Activated CD4-positive, alpha-beta T cell treated with anti-CD3 and anti-CD28 coated beads for 36 hours (primary cell): ENCODE measurements at regions of chr18 and their contacts with region 1.

Region 1: GRCh38 chr18:2958819-2959298 is 54.1 kb downstream of the LPIN2 start:
- DNase-seq: peak; percentile 63
- ATAC-seq: no peak
- H3K4me3 Mint-ChIP-seq: peak overlapping the region; percentile 71
- H3K27ac Mint-ChIP-seq: peak overlapping the region; percentile 100
- H3K4me1 Mint-ChIP-seq: peaks cover 90% of the 10 kb centered on the region
- H3K27me3 Mint-ChIP-seq: no peaks in the 10 kb centered on the region

Region 2: DNA sequence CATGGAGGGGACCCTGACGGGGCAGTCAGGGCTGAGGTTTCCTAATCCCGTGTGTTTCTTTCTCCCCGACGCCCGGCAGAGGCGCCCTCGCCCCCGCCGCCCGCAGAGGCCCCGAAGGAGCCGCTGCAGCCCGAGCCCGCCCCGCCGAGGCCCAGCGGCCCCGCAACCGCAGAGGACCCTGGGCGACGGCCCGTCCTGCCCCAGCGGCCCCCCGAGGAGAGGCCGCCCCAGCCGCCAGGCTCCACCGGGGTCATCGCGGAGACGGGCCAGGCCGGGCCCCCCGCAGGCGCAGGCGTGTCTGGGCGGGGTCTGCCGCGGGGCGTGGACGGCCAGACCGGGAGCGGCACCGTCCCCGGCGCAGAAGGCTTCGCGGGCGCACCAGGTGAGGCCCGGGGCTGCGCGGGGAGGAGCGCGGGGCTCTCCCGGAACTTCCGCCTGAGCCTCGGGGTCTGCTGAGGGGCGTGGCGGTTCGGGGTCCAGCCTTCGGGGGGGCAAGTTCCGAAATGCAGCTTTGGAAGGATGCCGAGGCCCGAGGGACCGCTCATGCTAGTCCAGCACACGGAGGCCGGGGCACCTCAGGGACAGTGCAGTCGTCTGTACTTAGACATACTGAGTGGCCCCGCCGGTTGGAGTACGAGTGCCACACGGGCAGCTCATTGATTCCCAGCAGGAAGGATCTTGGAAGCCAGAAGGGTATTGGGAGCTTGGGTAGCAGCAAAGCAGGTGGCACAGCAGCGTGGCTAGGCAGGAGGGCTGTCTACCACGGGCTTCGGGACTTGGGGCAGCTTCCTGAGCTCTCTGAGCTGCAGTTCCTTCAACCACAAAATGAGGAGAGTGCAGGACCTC is 51.9 kb before region 1 on chr18:
- CTCF ChIA-PET with region 1: no interaction called
- POLR2A ChIA-PET with region 1: no interaction called
- intact Hi-C with region 1: no loop called
- DNase-seq: peak; percentile 63
- ATAC-seq: peak; percentile 67
- H3K4me3 Mint-ChIP-seq: peak overlapping the region; percentile 78
- H3K27ac Mint-ChIP-seq: peak overlapping the region; percentile 72
- H3K4me1 Mint-ChIP-seq: peaks cover 17% of the 10 kb centered on the region
- H3K27me3 Mint-ChIP-seq: no peaks in the 10 kb centered on the region

Region 3: DNA sequence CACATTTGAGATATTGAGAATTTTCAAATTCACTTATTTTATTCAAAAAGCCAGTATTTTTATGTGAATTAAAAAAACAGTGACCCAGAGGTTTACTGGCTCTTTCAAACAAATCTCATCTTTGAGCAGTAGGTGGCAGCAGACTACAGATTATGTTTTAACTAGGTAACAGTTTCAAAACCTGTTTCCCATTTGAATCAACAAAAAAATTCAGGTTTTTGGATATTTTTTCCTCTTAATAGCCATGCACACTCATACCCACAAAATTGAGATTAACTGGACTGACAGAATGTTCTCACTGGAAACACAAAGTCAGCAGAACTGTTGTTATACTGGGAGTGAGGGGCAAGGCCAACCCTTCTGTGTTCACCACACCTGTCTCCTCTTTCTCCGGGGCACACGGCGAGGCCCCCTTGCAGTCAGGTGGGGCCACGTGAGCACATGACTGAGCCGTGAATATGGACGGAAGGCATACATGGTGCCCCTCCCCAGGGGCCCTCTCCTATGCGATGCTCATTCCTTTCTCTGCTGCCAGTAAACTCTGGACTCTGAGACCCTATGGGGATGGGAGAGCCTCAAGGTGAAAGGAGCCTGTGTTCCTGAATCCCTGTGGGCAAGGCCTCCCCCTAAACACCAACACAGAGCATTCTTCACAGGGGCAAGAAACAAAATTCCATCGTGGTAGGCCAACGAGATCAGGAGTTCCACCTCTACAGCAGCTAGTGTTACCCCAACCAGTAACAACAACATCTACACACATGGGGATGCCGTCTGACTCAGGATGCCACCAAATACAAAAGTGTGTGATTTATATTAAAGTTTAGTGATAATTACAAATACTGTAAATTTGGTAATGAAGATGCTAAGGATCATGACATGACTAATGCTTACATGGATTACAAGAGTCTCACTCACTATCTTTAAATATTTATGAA is 26.3 kb before region 1 on chr18:
- CTCF ChIA-PET with region 1: interaction called, 12 read pairs
- POLR2A ChIA-PET with region 1: interaction called, 3 read pairs
- intact Hi-C with region 1: loop called in 1 of 2 experiments (anchors 2 kb)
- DNase-seq: peak; percentile 50
- ATAC-seq: peak; percentile 60
- H3K4me3 Mint-ChIP-seq: no peak overlapping the region
- H3K27ac Mint-ChIP-seq: peak overlapping the region; percentile 81
- H3K4me1 Mint-ChIP-seq: peaks cover 41% of the 10 kb centered on the region
- H3K27me3 Mint-ChIP-seq: no peaks in the 10 kb centered on the region

Region 4: DNA sequence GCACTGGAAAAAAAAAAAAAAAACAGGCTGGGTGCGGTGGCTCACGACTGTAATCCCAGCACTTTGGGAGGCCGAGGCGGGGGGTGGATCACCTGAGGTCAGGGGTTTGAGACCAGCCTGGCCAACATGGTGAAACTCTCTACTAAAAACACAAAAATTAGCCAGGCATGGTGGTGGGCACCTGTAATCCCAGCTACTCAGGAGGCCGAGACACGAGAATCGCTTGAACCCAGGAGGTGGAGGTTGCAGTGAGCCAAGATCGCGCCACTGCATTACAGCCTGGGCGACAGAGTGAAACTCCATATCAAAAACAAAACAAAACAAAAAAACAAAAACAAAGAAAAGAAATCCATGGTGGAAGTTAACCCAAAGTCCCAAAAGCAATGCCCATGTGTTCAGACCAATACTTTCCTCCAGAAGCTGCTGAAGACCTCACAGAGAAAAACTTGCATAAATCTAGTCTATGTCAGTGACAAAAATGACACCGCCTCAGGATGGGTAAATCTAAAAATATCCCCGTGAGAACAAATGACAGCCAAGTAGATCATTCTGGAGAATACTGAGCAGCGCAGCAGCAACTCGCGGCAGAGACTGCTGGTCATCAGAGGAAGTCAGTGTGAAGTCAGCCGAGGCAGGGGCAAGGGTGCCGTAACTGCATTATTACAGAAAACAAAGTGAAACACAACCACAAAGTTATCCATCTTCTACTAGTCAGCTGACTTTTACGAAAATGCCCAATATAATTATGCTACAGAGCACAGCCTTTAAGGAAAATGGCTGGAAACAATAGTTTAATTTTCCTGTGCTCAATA is 13.1 kb after region 1 on chr18:
- CTCF ChIA-PET with region 1: interaction called, 78 read pairs
- POLR2A ChIA-PET with region 1: interaction called, 40 read pairs
- intact Hi-C with region 1: loop called (anchors 1 kb)
- DNase-seq: peak; percentile 86
- ATAC-seq: peak; percentile 74
- H3K4me3 Mint-ChIP-seq: peak overlapping the region; percentile 81
- H3K27ac Mint-ChIP-seq: peak overlapping the region; percentile 99
- H3K4me1 Mint-ChIP-seq: peaks cover 91% of the 10 kb centered on the region
- H3K27me3 Mint-ChIP-seq: no peaks in the 10 kb centered on the region

Region 5: DNA sequence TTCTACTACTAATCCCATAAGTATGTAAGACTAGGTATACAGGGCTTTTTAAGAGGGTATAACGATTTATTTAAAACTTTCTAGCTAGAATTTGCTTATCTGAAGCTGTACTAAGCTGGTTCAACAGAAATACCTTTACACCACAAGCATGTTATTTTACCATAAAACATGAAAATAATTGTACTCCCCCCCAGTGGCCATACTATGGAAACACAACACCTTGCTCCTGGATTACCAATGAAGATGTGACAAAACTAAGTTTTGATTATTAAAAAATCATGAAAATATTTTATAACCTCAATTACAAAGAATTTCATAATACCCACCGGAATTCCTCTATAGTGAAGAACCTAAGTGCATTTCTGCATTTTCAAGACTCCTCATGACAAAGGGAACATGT is 26.8 kb after region 1 on chr18:
- CTCF ChIA-PET with region 1: interaction called, 158 read pairs
- POLR2A ChIA-PET with region 1: interaction called, 40 read pairs
- intact Hi-C with region 1: loop called (anchors 1 kb)
- DNase-seq: no peak
- ATAC-seq: no peak
- H3K4me3 Mint-ChIP-seq: no peak overlapping the region
- H3K27ac Mint-ChIP-seq: no peak overlapping the region
- H3K4me1 Mint-ChIP-seq: peaks cover 75% of the 10 kb centered on the region
- H3K27me3 Mint-ChIP-seq: no peaks in the 10 kb centered on the region

Region 6: GRCh38 chr18:3012964-3013804 is 54.3 kb after region 1 on chr18 and contains the start of gene LPIN2:
- CTCF ChIA-PET with region 1: interaction called, 4 read pairs
- POLR2A ChIA-PET with region 1: no interaction called
- intact Hi-C with region 1: loop called in 1 of 2 experiments (anchors 1 kb)
- DNase-seq: peak; percentile 98
- ATAC-seq: peak; percentile 96
- H3K4me3 Mint-ChIP-seq: peak within 1 kb of the TSS; percentile 95
- H3K27ac Mint-ChIP-seq: peak within 1 kb of the TSS; percentile 94
- H3K4me1 Mint-ChIP-seq: peaks cover 66% of the 10 kb centered on the region
- H3K27me3 Mint-ChIP-seq: no peaks in the 10 kb centered on the region
- total RNA-seq, gene LPIN2: 82.6 to 95.3 TPM